ENCODE measurements at regions of chr3 and their contacts with region 1.

Region 1: DNA sequence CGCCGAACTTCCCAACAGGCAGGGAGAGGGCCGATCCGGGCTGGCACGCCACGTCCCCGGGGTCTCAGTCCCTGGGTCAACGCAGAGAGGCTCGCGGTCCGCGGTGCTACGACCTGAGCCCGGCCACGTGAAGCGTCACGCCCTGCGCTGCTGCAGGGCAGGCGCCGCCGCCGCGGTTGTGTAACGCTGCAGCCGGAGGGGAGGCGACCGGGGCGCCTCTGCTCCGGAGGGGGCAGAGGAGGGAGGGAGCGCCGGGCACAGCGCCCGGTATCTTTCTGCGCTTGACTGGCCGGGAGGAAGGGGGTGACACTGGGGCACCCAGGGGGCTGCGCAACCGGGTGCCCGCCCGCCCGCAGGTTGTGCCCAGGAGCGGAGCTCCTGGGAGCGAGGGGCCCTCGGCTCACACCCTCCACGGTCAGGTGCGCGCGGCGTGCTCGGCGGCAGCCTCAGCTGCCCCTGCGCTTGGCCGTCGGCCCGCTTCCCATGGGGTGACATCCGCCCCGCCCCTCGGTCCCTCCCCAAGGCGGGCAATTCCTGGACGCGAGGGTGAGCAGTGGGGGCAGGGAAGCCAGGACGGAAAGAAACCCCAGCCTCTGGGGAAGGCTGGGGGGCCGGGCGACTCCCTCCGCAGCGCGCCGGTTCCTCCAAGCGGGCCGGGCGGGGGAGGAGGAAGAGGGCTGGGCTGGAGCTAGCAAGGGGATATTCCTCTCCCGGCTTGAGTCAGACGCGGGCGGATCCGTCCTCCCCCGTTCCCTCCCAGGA is 852 bp upstream of the BHLHE40 start:
- DNase-seq: peak; percentile 89
- H3K4me3 Mint-ChIP-seq: peak overlapping the region; percentile 91
- H3K27ac Mint-ChIP-seq: peak overlapping the region; percentile 100
- H3K4me1 Mint-ChIP-seq: peaks cover 36% of the 10 kb centered on the region
- H3K27me3 Mint-ChIP-seq: no peaks in the 10 kb centered on the region

Region 2: GRCh38 chr3:4387210-4388204 is 590.9 kb before region 1 on chr3:
- intact Hi-C with region 1: loop called (anchors 1 kb)
- DNase-seq: no peak
- H3K4me3 Mint-ChIP-seq: peak overlapping the region; percentile 8
- H3K27ac Mint-ChIP-seq: peak overlapping the region; percentile 88
- H3K4me1 Mint-ChIP-seq: peaks cover 52% of the 10 kb centered on the region
- H3K27me3 Mint-ChIP-seq: peaks cover 1% of the 10 kb centered on the region

Region 3: GRCh38 chr3:4741404-4742307 is 236.7 kb before region 1 on chr3:
- intact Hi-C with region 1: loop called (anchors 1 kb)
- DNase-seq: no peak
- H3K4me3 Mint-ChIP-seq: peak overlapping the region; percentile 74
- H3K27ac Mint-ChIP-seq: peak overlapping the region; percentile 89
- H3K4me1 Mint-ChIP-seq: peaks cover 79% of the 10 kb centered on the region
- H3K27me3 Mint-ChIP-seq: no peaks in the 10 kb centered on the region

Region 4: DNA sequence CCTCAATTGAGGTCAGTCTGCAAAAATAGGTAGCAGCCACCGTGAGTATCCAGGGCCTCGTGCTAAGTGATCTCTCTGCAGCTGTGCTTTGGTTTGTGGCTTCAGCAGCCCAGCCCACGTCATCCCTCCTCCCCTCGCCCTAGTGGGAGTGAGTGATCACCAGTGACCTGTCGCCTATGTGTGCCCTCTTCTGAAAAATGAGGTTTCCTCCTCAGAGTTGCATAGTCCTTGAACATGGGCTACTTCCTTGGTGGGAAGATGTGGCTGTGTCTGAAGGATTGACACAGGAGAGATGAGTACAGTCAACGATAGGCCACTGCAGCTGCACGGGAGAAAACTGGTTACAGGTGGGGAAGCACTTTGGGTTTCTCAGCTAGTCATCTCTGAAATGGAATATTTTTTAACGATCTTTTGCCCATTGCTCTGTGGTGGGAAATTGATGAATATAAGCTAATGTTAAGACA is 143.9 kb before region 1 on chr3:
- intact Hi-C with region 1: loop called (anchors 1 kb)
- DNase-seq: peak; percentile 80
- H3K4me3 Mint-ChIP-seq: peak overlapping the region; percentile 79
- H3K27ac Mint-ChIP-seq: peak overlapping the region; percentile 98
- H3K4me1 Mint-ChIP-seq: peaks cover 86% of the 10 kb centered on the region
- H3K27me3 Mint-ChIP-seq: no peaks in the 10 kb centered on the region

Region 5: DNA sequence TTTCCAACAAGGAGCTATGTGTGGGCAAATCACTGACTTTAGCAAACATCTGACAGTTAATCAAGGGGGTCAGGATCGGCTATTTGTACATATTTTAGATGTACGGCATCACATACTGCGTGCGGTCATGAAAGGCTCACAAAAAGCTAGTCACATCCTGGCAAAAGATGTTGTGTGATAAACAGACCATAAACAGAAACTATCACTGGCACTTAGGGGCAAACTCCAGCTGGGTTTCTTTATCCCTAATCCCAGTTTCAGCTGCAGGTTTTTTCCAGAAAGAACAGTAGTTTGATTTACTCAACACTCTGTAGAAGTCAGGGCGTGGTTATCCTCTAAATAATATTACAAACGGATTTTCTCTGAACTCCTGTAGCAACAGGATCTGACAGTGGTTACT is 111.5 kb before region 1 on chr3:
- intact Hi-C with region 1: no loop called
- DNase-seq: no peak
- H3K4me3 Mint-ChIP-seq: peak overlapping the region; percentile 84
- H3K27ac Mint-ChIP-seq: peak overlapping the region; percentile 95
- H3K4me1 Mint-ChIP-seq: peaks cover 68% of the 10 kb centered on the region
- H3K27me3 Mint-ChIP-seq: no peaks in the 10 kb centered on the region

Region 6: DNA sequence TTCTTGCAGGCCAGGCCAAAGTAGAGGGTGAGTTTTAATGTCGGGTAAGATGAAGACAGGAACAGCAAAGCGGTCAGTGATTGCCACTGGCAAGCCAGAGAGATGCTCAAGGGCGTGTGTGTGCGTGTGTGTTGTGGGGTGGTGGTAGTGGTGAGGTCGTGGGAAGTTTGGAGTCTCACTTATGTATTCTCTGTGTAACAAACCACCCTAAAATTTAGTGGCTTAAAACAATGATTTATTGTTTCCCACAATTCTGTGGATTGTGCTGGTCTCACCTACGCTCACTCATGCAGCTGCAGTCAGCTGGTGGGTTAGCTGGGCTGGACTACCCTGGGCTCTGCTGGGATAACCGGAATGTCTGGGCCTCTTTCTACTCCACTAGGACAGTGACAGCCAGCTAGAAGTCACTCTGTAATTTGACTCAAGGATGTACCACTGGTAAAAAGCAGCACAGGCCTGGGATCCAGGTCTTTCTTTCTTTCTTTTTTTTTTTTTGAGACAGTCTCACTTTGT is 50.1 kb before region 1 on chr3:
- intact Hi-C with region 1: loop called (anchors 2 kb)
- DNase-seq: no peak
- H3K4me3 Mint-ChIP-seq: peak overlapping the region; percentile 20
- H3K27ac Mint-ChIP-seq: peak overlapping the region; percentile 79
- H3K4me1 Mint-ChIP-seq: peaks cover 60% of the 10 kb centered on the region
- H3K27me3 Mint-ChIP-seq: no peaks in the 10 kb centered on the region

Region 7: GRCh38 chr3:4994823-4995499 is 16.6 kb after region 1 on chr3:
- intact Hi-C with region 1: no loop called
- DNase-seq: no peak
- H3K4me3 Mint-ChIP-seq: no peak overlapping the region
- H3K27ac Mint-ChIP-seq: no peak overlapping the region
- H3K4me1 Mint-ChIP-seq: peaks cover 63% of the 10 kb centered on the region
- H3K27me3 Mint-ChIP-seq: no peaks in the 10 kb centered on the region

Region 8: GRCh38 chr3:5122030-5122740 is 143.8 kb after region 1 on chr3 and contains the start of gene ARL8B:
- intact Hi-C with region 1: loop called (anchors 2 kb)
- DNase-seq: peak; percentile 90
- H3K4me3 Mint-ChIP-seq: peak within 1 kb of the TSS; percentile 88
- H3K27ac Mint-ChIP-seq: peak within 1 kb of the TSS; percentile 87
- H3K4me1 Mint-ChIP-seq: peaks cover 40% of the 10 kb centered on the region
- H3K27me3 Mint-ChIP-seq: no peaks in the 10 kb centered on the region
- total RNA-seq, gene ARL8B: 43.4 and 51.0 TPM in 2 replicates